Mammary epithelial cell (primary cell): ENCODE measurements at regions of chr9 and their contacts with region 1.

Region 1: GRCh38 chr9:4984621-4985385 is at the start of gene JAK2:
- DNase-seq: peak; percentile 95
- H3K4me3 ChIP-seq: peak within 1 kb of the TSS; percentile 67 to 81 (median 73)
- H3K27ac ChIP-seq: peak within 1 kb of the TSS; percentile 79
- H3K4me1 ChIP-seq: peaks cover 23% of the 10 kb centered on the region
- H3K27me3 ChIP-seq: no peaks in the 10 kb centered on the region
- CTCF ChIP-seq: peak in 1 of 2 donors; percentile 47
- total RNA-seq, gene JAK2: 5.7 to 6.2 TPM

Region 2: DNA sequence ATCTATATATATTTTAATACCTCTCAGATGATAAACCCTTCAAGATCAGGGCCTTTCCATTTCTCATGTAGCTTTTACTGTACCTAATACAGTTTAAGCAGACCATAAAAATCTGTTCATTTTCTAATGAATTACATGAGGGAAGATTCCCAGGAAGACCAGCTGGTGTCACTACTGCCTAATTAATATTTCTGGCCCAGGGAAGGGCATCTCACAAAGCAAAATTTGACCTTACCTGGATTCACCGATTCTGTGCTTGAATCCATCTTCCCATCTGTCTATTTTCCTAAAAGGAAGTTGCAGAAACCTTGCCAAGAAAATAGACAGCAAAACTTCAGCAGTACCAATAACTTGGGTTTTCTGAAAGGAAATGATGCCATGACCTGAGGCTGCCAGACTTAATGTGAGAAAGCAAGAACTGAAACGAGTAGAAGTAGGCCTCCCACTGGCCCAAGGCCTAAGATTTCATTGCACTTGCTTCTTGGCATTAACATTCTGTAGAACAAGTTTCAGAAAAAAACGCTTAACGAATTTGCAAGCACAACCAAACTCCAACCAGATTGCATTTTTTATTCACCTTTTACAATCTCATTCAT is 602.0 kb before region 1 on chr9:
- CTCF ChIA-PET with region 1: no interaction called
- dilution Hi-C with region 1: no loop called
- in situ Hi-C with region 1: no loop called
- intact Hi-C with region 1: loop called (anchors 2 kb)
- DNase-seq: peak; percentile 14
- H3K4me3 ChIP-seq: no peak overlapping the region
- H3K27ac ChIP-seq: no peak overlapping the region
- H3K4me1 ChIP-seq: no peaks in the 10 kb centered on the region
- H3K27me3 ChIP-seq: no peaks in the 10 kb centered on the region
- CTCF ChIP-seq: peak; percentile 54 to 61

Region 3: GRCh38 chr9:4422495-4422894 is 562.3 kb before region 1 on chr9:
- CTCF ChIA-PET with region 1: no interaction called
- dilution Hi-C with region 1: no loop called
- in situ Hi-C with region 1: no loop called
- intact Hi-C with region 1: no loop called
- DNase-seq: no peak
- H3K4me3 ChIP-seq: no peak overlapping the region
- H3K27ac ChIP-seq: no peak overlapping the region
- H3K4me1 ChIP-seq: no peaks in the 10 kb centered on the region
- H3K27me3 ChIP-seq: no peaks in the 10 kb centered on the region
- CTCF ChIP-seq: no peak

Region 4: GRCh38 chr9:4750023-4750673 is 234.7 kb before region 1 on chr9:
- CTCF ChIA-PET with region 1: no interaction called
- dilution Hi-C with region 1: no loop called
- in situ Hi-C with region 1: loop called in 1 of 2 experiments (anchors 10 kb)
- intact Hi-C with region 1: no loop called
- DNase-seq: peak; percentile 29
- H3K4me3 ChIP-seq: no peak overlapping the region
- H3K27ac ChIP-seq: no peak overlapping the region
- H3K4me1 ChIP-seq: no peaks in the 10 kb centered on the region
- H3K27me3 ChIP-seq: no peaks in the 10 kb centered on the region
- CTCF ChIP-seq: peak; percentile 61 to 65

Region 5: DNA sequence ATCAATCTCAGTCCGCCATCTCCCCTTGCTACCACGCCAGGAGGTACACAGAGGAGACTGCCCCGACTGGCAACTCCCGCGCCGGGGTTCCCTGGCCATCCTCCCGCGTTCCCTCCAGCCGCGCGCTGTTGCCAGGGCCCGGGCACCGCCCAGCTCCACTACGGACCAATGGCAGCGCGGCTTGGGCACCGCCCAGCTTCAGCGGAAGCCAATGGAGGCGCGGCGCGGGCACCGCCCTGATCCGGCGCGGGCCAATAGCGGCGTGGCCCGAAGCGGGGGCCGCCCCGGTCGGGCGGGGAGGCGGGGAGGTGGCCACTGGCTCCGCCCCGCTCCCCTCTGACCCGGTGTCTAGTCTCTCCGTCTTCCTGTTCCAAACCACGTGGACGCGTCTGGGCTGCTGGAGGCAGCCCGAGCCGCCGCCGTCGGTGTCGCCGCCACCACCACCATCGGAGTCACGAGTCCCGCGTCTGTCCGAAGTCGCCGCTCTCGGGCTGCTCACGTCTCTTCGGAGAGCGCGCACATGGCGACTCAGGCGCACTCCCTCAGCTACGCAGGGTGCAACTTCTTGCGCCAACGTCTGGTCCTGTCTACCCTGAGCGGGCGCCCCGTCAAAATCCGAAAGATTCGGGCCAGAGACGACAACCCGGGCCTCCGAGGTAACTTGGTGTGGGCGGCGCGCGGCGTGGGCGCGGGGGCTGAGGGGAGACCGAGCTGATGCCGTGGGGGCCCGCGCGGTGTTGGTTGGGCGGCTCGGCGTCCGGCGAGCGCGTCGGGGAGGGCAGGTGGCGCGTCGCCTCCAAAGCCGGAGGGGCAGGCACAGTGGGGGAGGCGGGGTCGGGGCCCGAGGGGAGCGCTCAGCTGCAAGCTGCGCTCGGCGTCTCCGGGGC is 192.0 kb before region 1 on chr9 and contains the start of gene RCL1:
- CTCF ChIA-PET with region 1: no interaction called
- dilution Hi-C with region 1: no loop called
- in situ Hi-C with region 1: no loop called
- intact Hi-C with region 1: loop called (anchors 1 kb)
- DNase-seq: peak; percentile 97
- H3K4me3 ChIP-seq: peak within 1 kb of the TSS; percentile 62 to 97 (median 94)
- H3K27ac ChIP-seq: peak within 1 kb of the TSS; percentile 68
- H3K4me1 ChIP-seq: peaks cover 10% of the 10 kb centered on the region
- H3K27me3 ChIP-seq: no peaks in the 10 kb centered on the region
- CTCF ChIP-seq: no peak
- total RNA-seq, gene RCL1: 20.7 to 24.2 TPM

Region 6: DNA sequence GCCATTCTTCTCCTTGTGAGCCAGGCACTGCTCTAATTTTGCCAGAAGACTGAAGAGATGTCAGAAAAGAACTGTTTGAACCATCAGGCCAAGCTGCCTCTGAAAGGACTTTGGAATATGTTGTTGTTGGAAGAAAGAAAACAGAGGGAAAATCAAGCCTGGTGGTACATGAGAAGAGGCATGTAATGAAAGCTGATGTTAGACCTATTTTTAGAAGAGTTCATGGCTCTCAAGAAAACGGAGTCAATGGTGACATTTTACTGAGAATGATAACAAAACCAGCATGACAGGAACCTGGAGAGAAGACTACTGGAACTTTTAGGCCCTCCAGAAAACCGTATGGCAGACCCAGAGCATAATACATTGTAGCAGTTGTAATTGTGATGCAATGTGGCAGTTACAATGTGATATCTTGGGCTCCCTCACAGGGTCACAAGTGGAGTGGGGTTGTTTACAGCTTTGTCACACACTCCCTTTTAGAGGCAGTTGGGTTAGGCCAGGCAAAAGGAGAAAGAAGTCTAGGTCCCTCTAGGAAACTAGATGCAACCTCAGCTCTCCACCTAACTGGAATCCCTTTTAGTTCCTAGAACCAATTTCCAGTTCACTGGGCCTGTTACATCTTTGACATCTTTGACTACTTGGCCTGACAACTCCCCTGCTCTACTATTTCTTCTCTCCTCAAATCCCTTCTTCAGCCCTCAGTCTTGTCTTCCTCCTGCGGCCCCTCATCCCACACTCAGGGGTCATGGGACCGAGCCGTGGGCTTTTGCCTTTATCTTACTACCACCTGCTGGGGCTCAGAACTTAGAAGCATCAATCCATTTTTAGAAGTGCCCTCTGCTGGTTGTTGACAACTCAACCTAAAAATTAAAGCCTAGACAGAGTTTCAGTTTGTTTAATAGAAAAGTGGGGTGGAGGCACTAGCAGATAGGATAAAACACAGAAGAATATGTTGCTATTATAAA is 60.9 kb before region 1 on chr9:
- CTCF ChIA-PET with region 1: no interaction called
- dilution Hi-C with region 1: no loop called
- in situ Hi-C with region 1: no loop called
- intact Hi-C with region 1: loop called (anchors 5 kb)
- DNase-seq: peak; percentile 28
- H3K4me3 ChIP-seq: no peak overlapping the region
- H3K27ac ChIP-seq: no peak overlapping the region
- H3K4me1 ChIP-seq: no peaks in the 10 kb centered on the region
- H3K27me3 ChIP-seq: no peaks in the 10 kb centered on the region
- CTCF ChIP-seq: peak; percentile 25 to 44

Region 7: DNA sequence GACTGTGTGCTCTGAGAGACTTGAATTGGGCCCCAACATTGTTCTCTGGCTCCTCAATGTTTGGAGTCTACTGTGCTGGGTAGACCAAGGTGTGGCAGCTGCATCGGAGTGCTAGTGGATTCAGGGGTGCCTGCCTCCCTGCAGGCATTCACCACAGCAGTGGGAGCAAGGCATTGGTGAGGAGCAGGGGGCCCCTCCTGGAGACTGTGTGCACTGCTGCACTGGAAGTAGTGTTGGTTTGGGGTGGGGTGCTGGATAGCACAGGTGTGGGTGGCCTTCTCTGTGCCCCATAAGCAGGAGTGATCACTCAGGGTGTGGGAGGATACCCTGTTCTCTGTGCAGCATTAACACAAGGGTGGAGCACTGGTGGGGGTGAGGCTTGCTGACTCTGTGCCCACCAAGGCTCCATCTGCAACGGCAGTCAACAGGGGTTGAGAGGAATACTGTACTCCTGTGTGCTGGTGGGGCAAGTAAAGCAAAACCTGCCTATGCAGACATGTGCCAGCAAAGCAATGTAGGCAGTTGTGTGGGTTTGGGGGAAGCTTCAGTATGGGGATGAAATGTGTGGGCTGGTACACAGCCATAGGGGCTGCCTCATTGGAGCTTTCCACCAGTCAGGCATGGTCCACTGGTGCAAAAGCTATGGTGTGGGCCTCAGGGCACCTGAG is 161.6 kb after region 1 on chr9:
- CTCF ChIA-PET with region 1: no interaction called
- dilution Hi-C with region 1: no loop called
- in situ Hi-C with region 1: no loop called
- intact Hi-C with region 1: no loop called
- DNase-seq: no peak
- H3K4me3 ChIP-seq: no peak overlapping the region
- H3K27ac ChIP-seq: no peak overlapping the region
- H3K4me1 ChIP-seq: no peaks in the 10 kb centered on the region
- H3K27me3 ChIP-seq: no peaks in the 10 kb centered on the region
- CTCF ChIP-seq: no peak

Region 8: DNA sequence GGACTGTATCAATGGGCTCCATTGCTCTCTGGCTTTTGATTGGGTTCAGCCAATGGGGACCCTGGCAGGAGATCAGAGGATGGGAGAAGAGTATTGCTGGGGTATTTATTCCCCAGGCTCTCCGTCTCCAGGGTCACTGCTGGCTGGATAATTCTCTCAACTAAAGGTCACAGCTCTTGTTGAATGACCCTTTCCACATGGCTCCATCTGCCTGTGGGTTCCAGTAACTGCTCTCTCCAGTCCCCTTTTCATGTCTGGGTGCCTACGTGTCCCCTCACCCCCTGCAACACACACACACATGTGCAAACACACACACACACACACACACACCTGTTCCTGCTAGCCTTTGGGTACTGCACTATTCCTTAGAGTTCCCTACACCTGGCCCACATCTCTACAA is 590.2 kb after region 1 on chr9:
- CTCF ChIA-PET with region 1: no interaction called
- dilution Hi-C with region 1: no loop called
- in situ Hi-C with region 1: no loop called
- intact Hi-C with region 1: loop called (anchors 1 kb)
- DNase-seq: no peak
- H3K4me3 ChIP-seq: no peak overlapping the region
- H3K27ac ChIP-seq: no peak overlapping the region
- H3K4me1 ChIP-seq: peaks cover 8% of the 10 kb centered on the region
- H3K27me3 ChIP-seq: no peaks in the 10 kb centered on the region
- CTCF ChIP-seq: peak in 1 of 2 donors; percentile 16